CD4-positive, alpha-beta memory T cell (primary cell): ENCODE measurements at regions of chr2 and their contacts with region 1.

Region 1: DNA sequence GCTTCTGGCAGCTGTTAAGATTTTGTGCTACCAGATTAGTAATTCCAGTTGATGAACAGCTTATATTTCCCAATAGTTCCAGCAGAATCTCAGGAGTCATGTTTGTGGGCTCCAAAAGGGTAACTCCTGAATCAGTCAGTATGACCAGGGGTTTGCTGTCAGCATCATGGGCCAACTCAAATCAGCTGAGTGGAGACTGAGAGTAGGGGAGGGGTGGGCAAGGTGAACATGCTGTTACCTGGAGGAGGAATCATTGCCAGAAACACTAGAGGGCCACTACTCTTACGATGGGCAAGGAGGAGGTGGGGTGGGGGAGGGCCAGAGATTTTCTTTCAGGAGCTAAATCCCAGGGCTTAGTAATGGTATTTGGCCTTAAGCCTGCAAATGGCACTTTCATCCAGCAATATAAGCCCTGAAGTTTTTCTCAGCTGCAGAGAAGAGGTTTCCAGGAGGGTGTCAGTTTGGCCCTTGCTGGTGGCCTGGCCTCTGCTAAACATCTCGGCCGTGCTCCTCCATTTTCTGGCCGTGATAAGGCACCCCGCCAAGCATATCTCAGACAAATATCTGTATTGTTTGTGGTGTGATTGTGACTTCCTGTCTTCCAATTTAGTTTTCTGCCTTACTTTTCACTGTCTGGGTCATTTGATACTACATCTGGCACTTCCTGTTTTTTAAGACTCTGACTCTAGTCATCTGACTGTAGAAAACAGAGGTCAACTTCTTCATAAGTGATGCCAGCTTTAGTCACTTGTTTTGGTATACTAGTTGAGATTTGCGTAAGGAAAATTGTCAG is 120.5 kb upstream of the CXCR4 start:
- DNase-seq: peak; percentile 72 to 83 (median 75)
- H3K4me3 ChIP-seq: no peak overlapping the region
- H3K4me3 Mint-ChIP-seq: peak overlapping the region; percentile 4 to 75 (median 40)
- H3K27ac ChIP-seq: peak overlapping the region; percentile 39
- H3K27ac Mint-ChIP-seq: peak overlapping the region; percentile 73 to 99 (median 95)
- H3K4me1 ChIP-seq: peaks cover 51% of the 10 kb centered on the region
- H3K4me1 Mint-ChIP-seq: peaks cover 40 to 62% (median 54%) of the 10 kb centered on the region in 4 donors
- H3K27me3 ChIP-seq: no peaks in the 10 kb centered on the region
- H3K27me3 Mint-ChIP-seq: no peaks in the 10 kb centered on the region

Region 2: GRCh38 chr2:135694711-135695110 is 543.8 kb before region 1 on chr2:
- CTCF ChIA-PET with region 1: no interaction called
- POLR2A ChIA-PET with region 1: no interaction called
- intact Hi-C with region 1: no loop called
- DNase-seq: no peak
- H3K4me3 ChIP-seq: no peak overlapping the region
- H3K4me3 Mint-ChIP-seq: no peak overlapping the region
- H3K27ac ChIP-seq: no peak overlapping the region
- H3K27ac Mint-ChIP-seq: peak overlapping the region in 4 of 7 donors; percentile 36 to 54 (median 48)
- H3K4me1 ChIP-seq: peaks cover 6% of the 10 kb centered on the region
- H3K4me1 Mint-ChIP-seq: peaks cover 4 to 9% (median 6%) of the 10 kb centered on the region in 4 donors
- H3K27me3 ChIP-seq: no peaks in the 10 kb centered on the region
- H3K27me3 Mint-ChIP-seq: no peaks in the 10 kb centered on the region

Region 3: DNA sequence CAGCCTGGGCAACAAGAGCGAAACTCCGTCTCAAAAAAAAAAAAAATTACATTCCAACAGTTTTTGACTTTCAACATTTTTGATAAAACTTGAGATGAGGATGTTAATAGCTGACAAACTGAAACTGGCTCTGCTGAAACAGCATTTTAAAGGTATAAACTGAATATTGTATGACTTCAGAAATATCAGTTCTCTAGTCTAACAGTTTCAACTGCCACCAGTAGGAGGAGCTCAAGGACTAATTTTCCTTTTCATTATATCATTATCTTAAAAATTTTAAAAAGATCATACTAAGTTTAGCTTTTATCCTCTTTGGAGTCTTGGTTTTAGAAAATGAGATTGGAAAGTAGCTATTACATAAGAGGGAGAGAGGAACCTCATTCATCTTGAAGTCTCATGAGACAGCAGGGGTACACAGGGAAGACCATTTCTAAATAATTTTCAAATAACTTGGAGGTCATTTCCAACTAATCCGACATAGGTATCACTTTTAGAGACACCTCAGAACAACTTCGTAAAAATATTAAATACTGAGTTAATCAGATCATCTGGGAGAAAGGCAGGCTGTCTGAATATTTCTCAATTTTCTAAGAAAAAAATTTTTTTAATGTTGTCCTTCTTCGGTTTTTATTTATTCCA is 324.6 kb before region 1 on chr2:
- CTCF ChIA-PET with region 1: interaction called, 4 read pairs
- POLR2A ChIA-PET with region 1: no interaction called
- intact Hi-C with region 1: loop called (anchors 5 kb)
- DNase-seq: peak; percentile 48 to 61 (median 58)
- H3K4me3 ChIP-seq: no peak overlapping the region
- H3K4me3 Mint-ChIP-seq: no peak overlapping the region
- H3K27ac ChIP-seq: no peak overlapping the region
- H3K27ac Mint-ChIP-seq: peak overlapping the region; percentile 34 to 90 (median 81)
- H3K4me1 ChIP-seq: no peaks in the 10 kb centered on the region
- H3K4me1 Mint-ChIP-seq: peaks cover 0 to 8% (median 3%) of the 10 kb centered on the region in 4 donors
- H3K27me3 ChIP-seq: no peaks in the 10 kb centered on the region
- H3K27me3 Mint-ChIP-seq: no peaks in the 10 kb centered on the region

Region 4: DNA sequence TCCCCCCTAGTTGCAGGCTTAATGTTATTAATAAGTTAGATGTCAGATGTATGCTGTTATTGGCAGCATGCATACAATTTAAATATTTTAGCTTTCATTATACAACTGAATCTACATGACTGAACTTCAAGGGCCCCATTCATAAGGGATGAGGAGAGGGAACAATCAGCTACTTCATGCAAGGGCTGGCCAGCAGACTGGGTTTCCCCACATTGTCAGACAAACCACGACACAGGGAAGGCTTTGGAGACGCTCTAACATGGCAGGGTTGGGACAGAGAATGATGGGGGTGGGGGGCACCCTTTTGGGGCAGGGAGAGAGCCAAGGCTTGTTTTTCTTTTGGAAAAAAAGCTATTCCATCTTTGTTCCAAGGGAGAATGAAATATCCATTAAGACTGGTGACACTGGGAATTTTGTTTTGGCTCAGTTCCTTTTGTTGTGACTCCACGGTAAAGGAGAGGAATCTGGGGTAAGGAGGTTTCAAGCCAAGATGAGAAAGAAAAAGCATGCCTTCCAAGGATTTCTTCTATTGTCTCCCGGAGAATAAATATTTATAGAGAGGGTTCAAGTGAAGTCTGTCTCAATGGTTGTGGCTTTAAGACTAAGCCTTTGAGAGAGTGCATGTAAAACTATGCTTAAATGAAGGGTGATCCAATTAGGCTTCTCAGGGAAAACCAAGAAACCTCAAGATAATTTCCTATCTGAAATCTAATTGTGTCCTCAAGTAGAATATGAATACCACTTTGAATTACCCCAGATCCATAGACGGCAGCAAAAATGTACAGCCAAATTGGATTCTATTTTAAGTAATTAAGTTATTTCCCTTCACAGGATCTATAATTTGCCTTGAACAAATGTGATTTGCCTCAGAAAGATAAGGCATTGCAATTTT is 125.9 kb before region 1 on chr2:
- CTCF ChIA-PET with region 1: interaction called, 6 read pairs
- POLR2A ChIA-PET with region 1: interaction called, 126 read pairs
- intact Hi-C with region 1: loop called (anchors 2 kb)
- DNase-seq: peak in 1 of 5 donors; percentile 42
- H3K4me3 ChIP-seq: no peak overlapping the region
- H3K4me3 Mint-ChIP-seq: peak overlapping the region in 4 of 8 donors; percentile 36 to 88 (median 56)
- H3K27ac ChIP-seq: no peak overlapping the region
- H3K27ac Mint-ChIP-seq: peak overlapping the region in 4 of 7 donors; percentile 79 to 99 (median 92)
- H3K4me1 ChIP-seq: peaks cover 34% of the 10 kb centered on the region
- H3K4me1 Mint-ChIP-seq: peaks cover 31 to 50% (median 38%) of the 10 kb centered on the region in 4 donors
- H3K27me3 ChIP-seq: no peaks in the 10 kb centered on the region
- H3K27me3 Mint-ChIP-seq: no peaks in the 10 kb centered on the region

Region 5: GRCh38 chr2:136225950-136226835 is 12.3 kb before region 1 on chr2:
- CTCF ChIA-PET with region 1: interaction called, 4 read pairs
- POLR2A ChIA-PET with region 1: interaction called, 28 read pairs
- intact Hi-C with region 1: no loop called
- DNase-seq: peak; percentile 43 to 67 (median 47)
- H3K4me3 ChIP-seq: no peak overlapping the region
- H3K4me3 Mint-ChIP-seq: no peak overlapping the region
- H3K27ac ChIP-seq: no peak overlapping the region
- H3K27ac Mint-ChIP-seq: peak overlapping the region; percentile 24 to 91 (median 83)
- H3K4me1 ChIP-seq: peaks cover 15% of the 10 kb centered on the region
- H3K4me1 Mint-ChIP-seq: peaks cover 10 to 14% (median 12%) of the 10 kb centered on the region in 4 donors
- H3K27me3 ChIP-seq: no peaks in the 10 kb centered on the region
- H3K27me3 Mint-ChIP-seq: no peaks in the 10 kb centered on the region

Region 6: DNA sequence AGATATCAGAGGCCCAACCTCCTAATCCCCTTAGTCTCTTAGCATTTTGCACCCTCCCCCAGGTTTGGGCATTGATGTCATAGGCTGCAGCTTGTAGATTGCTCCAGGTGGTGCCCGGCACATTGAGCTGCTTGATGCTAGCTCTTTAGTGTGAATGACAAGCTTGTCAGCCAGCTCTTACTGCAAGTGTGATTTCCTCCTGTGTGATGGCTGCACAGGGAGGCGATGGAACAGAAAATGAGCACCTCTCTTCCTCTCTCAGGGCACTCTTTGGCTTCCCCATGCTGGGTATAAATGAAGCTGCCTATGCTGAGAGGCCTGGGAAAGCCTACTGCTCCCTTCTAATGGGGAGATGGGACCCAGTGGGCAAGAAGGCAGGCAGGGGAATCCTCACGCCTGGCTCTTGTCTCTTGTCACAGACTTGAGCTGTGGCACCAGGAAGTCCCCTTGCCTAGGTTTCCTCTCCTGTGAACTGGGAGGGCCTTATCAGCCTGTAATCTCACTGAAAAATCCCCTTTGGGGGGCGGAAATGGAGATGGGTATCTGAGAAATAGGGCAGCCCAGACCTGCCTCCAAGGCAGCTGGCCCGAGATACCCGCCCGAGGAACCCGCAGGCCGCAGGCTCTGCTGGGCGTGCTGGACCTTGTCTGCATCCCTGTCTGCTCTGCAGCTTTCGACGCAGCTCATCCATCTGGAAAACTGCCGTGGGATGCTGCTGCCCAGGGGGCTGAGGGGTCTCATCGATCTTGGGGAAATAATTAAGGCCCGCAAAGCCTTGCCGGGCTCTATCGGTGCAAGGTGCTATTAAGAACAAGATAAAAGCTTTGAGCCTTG is 43.0 kb after region 1 on chr2:
- CTCF ChIA-PET with region 1: no interaction called
- POLR2A ChIA-PET with region 1: interaction called, 12 read pairs
- intact Hi-C with region 1: no loop called
- DNase-seq: peak; percentile 67 to 88 (median 70)
- H3K4me3 ChIP-seq: no peak overlapping the region
- H3K4me3 Mint-ChIP-seq: peak overlapping the region in 7 of 8 donors; percentile 44 to 75 (median 69)
- H3K27ac ChIP-seq: peak overlapping the region; percentile 36
- H3K27ac Mint-ChIP-seq: peak overlapping the region; percentile 90 to 99 (median 96)
- H3K4me1 ChIP-seq: peaks cover 34% of the 10 kb centered on the region
- H3K4me1 Mint-ChIP-seq: peaks cover 24 to 54% (median 35%) of the 10 kb centered on the region in 4 donors
- H3K27me3 ChIP-seq: no peaks in the 10 kb centered on the region
- H3K27me3 Mint-ChIP-seq: no peaks in the 10 kb centered on the region

Region 7: DNA sequence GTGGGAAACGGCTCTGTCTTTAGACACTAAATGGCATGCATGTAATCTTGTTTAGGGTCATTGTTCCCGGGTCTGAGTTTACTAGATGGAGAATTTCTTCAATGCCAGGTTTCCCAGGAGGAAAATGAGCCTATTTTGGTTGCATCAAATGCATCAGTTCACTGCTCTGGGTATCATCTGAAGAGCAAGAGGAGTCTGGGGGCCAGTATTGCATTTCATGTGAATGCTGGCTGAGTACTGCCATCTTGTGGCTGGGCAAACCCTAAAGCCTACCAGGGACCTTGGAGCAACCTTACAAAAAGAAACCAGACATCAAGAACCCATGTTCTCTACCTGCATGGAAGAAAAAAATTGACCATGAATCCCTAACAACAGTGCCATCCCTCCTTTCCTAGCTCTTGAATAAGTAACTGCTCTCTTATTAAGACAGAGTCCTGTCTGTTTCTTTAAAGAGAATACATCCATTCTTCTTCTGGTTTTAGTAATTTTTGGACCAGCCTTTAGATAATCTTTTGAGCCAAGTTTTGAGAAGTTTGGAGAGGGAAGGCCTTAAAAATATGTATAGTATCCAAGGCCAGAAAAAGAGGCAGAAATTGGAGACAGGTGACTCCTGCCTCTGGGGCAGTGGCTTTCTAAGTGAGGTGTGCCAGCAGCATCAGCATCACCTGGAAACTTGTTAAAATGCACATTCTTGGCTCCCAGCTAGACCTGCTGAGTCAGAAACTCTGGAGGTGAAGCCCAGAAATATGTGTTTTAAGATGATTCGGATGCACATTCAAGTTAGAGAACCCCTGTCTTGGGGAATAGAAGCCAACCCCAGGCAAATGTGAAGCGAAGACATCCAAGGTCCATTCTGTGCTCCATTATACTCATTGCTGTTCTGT is 140.5 kb after region 1 on chr2:
- CTCF ChIA-PET with region 1: interaction called, 5 read pairs
- POLR2A ChIA-PET with region 1: interaction called, 8 read pairs
- intact Hi-C with region 1: loop called (anchors 5 kb)
- DNase-seq: peak; percentile 71 to 78 (median 74)
- H3K4me3 ChIP-seq: no peak overlapping the region
- H3K4me3 Mint-ChIP-seq: no peak overlapping the region
- H3K27ac ChIP-seq: no peak overlapping the region
- H3K27ac Mint-ChIP-seq: peak overlapping the region in 6 of 7 donors; percentile 70 to 89 (median 78)
- H3K4me1 ChIP-seq: peaks cover 55% of the 10 kb centered on the region
- H3K4me1 Mint-ChIP-seq: peaks cover 49 to 79% (median 53%) of the 10 kb centered on the region in 4 donors
- H3K27me3 ChIP-seq: no peaks in the 10 kb centered on the region
- H3K27me3 Mint-ChIP-seq: no peaks in the 10 kb centered on the region